HepG2 (cell line): ENCODE measurements at regions of chr12 and their contacts with region 1.

Region 1: DNA sequence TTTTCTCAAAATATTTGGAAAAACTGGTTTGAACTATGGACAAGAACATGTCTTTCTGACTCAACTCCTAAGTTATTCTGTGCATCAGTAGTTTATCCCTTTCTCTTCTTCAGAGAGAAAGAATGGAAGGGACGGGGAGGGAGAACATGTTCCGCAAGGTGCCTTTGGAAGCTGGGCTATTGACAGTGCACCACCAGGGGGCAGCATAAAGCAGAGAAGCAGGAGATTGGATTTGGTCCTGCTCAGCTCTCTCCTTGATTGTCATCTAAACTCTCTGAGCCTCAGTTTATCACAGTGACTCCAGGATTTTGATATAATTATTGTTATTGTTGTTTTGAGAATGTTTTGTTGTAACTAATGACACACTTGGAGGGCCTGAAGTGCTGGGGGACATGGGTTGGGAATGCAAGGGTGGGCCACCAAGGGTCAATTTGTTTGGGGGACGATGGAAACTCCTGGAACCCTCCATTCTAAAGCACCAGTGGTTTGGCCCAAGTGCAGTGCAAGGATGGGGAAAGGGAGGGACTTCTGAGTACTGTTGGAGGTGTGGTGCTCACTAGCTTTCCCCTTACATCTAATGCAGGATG is 45.3 kb upstream of the ANO6 start:
- DNase-seq: peak; percentile 62
- ATAC-seq: peak; percentile 90
- H3K4me3 ChIP-seq: no peak overlapping the region
- H3K27ac ChIP-seq: no peak overlapping the region
- H3K4me1 ChIP-seq: no peaks in the 10 kb centered on the region
- H3K27me3 ChIP-seq: no peaks in the 10 kb centered on the region
- CTCF ChIP-seq: peak; percentile 86
- EP300 ChIP-seq: no peak
- POLR2A ChIP-seq: no peak
- RAD21 ChIP-seq: peak; percentile 64; the same call in 1 of the 2 replicates

Region 2: GRCh38 chr12:45268672-45269411 is 98.3 kb after region 1 on chr12:
- CTCF ChIA-PET with region 1: interaction called, 3 read pairs
- POLR2A ChIA-PET with region 1: no interaction called
- in situ Hi-C with region 1: no loop called
- intact Hi-C with region 1: loop called (anchors 5 kb)
- DNase-seq: peak; percentile 31
- ATAC-seq: peak; percentile 88
- H3K4me3 ChIP-seq: no peak overlapping the region
- H3K27ac ChIP-seq: no peak overlapping the region
- H3K4me1 ChIP-seq: peaks cover 16% of the 10 kb centered on the region
- H3K27me3 ChIP-seq: no peaks in the 10 kb centered on the region
- CTCF ChIP-seq: peak; percentile 45
- EP300 ChIP-seq: no peak
- POLR2A ChIP-seq: no peak
- RAD21 ChIP-seq: 0 out of 2 replicates have a peak, but pooled peaks have one; percentile 25